B cell (primary cell): ENCODE measurements at regions of chr2 and their contacts with region 1.

Region 1: GRCh38 chr2:219543601-219544358 is at the starts of genes CHPF and TMEM198:
- DNase-seq: peak; percentile 93
- ATAC-seq: peak; percentile 80
- H3K4me3 ChIP-seq: peak within 1 kb of the TSS in 4 of 5 experiments; percentile 63 to 78 (median 67)
- H3K4me3 Mint-ChIP-seq: peak within 1 kb of the TSS; percentile 83
- H3K27ac ChIP-seq: peak within 1 kb of the TSS in 1 of 2 donors; percentile 35
- H3K27ac Mint-ChIP-seq: peak within 1 kb of the TSS; percentile 50
- H3K4me1 ChIP-seq: peaks cover 29 to 31% of the 10 kb centered on the region in 2 donors
- H3K4me1 Mint-ChIP-seq: peaks cover 24% of the 10 kb centered on the region
- H3K27me3 ChIP-seq: peaks cover 0 to 82% (median 21%) of the 10 kb centered on the region in 4 experiments
- H3K27me3 Mint-ChIP-seq: peaks cover 40% of the 10 kb centered on the region
- CTCF ChIP-seq: no peak
- total RNA-seq, gene CHPF: 1.2 and 1.3 TPM in 2 replicates
- total RNA-seq, gene TMEM198: 0.39 TPM in 1 of 2 replicates, not detected in the other

Region 2: DNA sequence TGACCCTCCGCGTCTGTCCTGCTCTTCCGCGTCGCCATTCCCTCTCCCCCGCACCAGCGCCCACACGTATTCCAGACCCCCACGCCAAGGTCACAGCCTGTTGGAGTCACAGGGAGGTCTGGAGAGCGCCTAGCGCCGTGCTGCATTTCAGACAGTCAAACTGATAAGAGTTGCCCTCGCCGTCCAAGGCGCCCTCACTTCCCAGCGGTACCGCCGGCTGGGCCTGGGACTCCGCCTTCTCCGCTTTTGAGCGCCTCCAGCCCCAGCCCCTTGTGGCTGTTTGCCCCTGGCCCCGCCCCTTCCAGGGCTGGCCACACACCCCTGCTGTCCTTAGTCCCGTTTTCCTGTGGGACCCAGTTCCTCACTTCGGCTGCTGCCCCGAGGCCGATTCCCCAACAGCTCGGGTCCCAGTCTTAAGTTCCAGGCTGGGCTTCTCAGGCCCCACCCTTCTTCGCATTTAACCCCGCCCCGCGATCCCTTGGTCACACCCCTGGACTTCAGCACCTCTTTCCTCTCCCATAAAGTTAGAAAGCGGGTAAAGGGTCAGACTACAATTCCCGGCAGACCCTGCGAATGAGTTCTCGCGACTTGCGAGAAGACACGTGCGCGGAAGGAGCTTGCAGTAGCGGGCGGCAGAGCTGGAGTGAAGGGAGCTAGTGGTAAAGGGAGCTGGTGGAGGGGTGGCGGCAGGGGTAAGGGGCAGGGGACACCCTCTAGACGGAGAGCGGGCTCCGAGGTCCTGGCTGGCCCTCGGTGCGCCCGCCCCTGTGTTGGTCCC is 45.3 kb before region 1 on chr2 and contains the start of gene GMPPA:
- CTCF ChIA-PET with region 1: interaction called, 3 read pairs
- POLR2A ChIA-PET with region 1: no interaction called
- intact Hi-C with region 1: loop called (anchors 1 kb)
- DNase-seq: peak; percentile 94
- ATAC-seq: peak; percentile 96
- H3K4me3 ChIP-seq: peak within 1 kb of the TSS; percentile 65 to 90 (median 79)
- H3K4me3 Mint-ChIP-seq: peak within 1 kb of the TSS; percentile 93
- H3K27ac ChIP-seq: peak within 1 kb of the TSS in 1 of 2 donors; percentile 84
- H3K27ac Mint-ChIP-seq: peak within 1 kb of the TSS; percentile 87
- H3K4me1 ChIP-seq: peaks cover 38% of the 10 kb centered on the region in 2 donors
- H3K4me1 Mint-ChIP-seq: peaks cover 32% of the 10 kb centered on the region
- H3K27me3 ChIP-seq: peaks cover 0 to 46% (median 23%) of the 10 kb centered on the region in 4 experiments
- H3K27me3 Mint-ChIP-seq: peaks cover 33% of the 10 kb centered on the region
- CTCF ChIP-seq: no peak
- total RNA-seq, gene GMPPA: 27.8 and 32.0 TPM in 2 replicates

Region 3: DNA sequence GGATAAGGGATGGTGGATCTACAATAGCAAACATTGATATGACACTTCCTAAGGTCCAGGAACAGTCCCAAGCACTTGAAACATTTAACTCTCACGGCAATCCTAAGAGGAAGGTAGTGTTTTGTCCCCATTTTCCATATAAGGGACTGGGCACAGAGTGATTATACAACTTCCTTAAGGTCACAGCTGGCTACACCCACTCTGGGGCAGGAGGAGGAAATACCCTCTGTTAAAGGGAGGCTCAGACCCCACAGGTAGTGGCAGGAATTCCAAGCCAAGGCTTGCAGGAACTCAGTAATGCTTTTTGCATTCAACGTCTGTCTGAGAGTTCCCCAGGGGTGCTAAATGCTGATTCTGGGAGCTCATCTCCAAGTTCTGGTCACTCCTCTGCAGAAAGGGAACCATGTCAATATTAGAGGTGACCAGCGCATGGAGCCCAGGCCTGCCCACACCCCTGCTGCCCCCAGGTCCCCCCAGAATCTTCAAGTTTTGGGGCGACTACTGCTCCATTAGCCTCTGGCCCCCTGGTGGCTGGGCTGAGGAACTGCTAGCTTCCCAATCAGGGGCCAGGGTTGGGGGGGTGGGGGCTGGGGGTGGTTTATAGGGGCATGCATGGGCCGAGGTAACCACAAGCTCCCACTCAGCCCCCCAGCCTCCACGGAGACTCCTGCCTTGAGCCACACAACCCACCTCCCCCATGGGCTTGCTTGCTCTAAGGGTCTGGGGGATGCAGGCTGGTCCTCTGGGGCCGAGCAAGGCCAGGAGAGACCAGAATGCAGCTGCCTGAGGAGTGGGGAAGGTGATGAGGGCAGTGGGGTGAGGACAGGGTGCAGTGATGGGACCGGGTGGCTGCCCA is 16.5 kb after region 1 on chr2:
- CTCF ChIA-PET with region 1: interaction called, 11 read pairs
- POLR2A ChIA-PET with region 1: no interaction called
- intact Hi-C with region 1: no loop called
- DNase-seq: peak; percentile 42
- ATAC-seq: peak; percentile 43
- H3K4me3 ChIP-seq: no peak overlapping the region
- H3K4me3 Mint-ChIP-seq: no peak overlapping the region
- H3K27ac ChIP-seq: no peak overlapping the region
- H3K27ac Mint-ChIP-seq: no peak overlapping the region
- H3K4me1 ChIP-seq: no peaks in the 10 kb centered on the region
- H3K4me1 Mint-ChIP-seq: no peaks in the 10 kb centered on the region
- H3K27me3 ChIP-seq: peaks cover 0 to 15% (median 0%) of the 10 kb centered on the region in 4 experiments
- H3K27me3 Mint-ChIP-seq: peaks cover 29% of the 10 kb centered on the region
- CTCF ChIP-seq: peak; percentile 87

Region 4: DNA sequence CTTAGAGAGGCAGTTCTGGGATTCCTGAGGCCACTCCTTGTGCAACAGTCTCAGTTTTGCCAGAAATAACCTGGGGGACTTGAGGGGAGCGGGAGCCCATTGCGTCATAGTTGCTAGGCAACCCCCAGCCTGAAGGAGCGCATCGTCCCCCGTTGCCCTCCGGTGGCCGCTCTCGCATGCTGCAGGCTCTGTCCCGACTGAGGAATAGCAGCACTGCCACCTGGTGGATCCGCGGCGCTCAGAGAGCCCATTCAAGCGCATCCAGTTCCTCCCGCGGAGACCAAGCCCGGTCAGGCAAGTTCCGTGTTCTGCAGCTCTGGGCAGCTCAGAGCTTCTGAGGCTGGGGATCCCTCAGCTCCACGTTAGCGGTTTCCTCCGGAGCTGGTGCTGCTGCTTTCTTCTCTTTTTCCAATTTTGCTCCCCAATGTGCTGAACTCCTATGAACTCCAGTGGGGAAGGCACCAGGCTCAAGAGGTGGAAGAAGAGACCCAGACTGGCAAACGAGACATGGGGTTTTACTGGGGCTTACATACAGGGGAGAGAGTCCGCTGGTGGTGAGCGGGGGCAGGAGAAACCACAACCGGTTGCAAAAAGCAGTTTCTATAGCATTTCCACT is 98.8 kb after region 1 on chr2:
- CTCF ChIA-PET with region 1: interaction called, 13 read pairs
- POLR2A ChIA-PET with region 1: no interaction called
- intact Hi-C with region 1: loop called (anchors 1 kb)
- DNase-seq: peak; percentile 96
- ATAC-seq: peak; percentile 100
- H3K4me3 ChIP-seq: peak overlapping the region in 4 of 5 experiments; percentile 10 to 40 (median 27)
- H3K4me3 Mint-ChIP-seq: peak overlapping the region; percentile 75
- H3K27ac ChIP-seq: no peak overlapping the region
- H3K27ac Mint-ChIP-seq: peak overlapping the region; percentile 50
- H3K4me1 ChIP-seq: peaks cover 8 to 17% of the 10 kb centered on the region in 2 donors
- H3K4me1 Mint-ChIP-seq: peaks cover 15% of the 10 kb centered on the region
- H3K27me3 ChIP-seq: peaks cover 0 to 37% (median 4%) of the 10 kb centered on the region in 4 experiments
- H3K27me3 Mint-ChIP-seq: peaks cover 31% of the 10 kb centered on the region
- CTCF ChIP-seq: peak; percentile 99

Region 5: GRCh38 chr2:219689676-219690628 is 146.2 kb after region 1 on chr2:
- CTCF ChIA-PET with region 1: interaction called, 13 read pairs
- POLR2A ChIA-PET with region 1: no interaction called
- intact Hi-C with region 1: no loop called
- DNase-seq: peak; percentile 65
- ATAC-seq: peak; percentile 34
- H3K4me3 ChIP-seq: no peak overlapping the region
- H3K4me3 Mint-ChIP-seq: no peak overlapping the region
- H3K27ac ChIP-seq: no peak overlapping the region
- H3K27ac Mint-ChIP-seq: no peak overlapping the region
- H3K4me1 ChIP-seq: peaks cover 5 to 6% of the 10 kb centered on the region in 2 donors
- H3K4me1 Mint-ChIP-seq: peaks cover 8% of the 10 kb centered on the region
- H3K27me3 ChIP-seq: peaks cover 0 to 12% (median 2%) of the 10 kb centered on the region in 4 experiments
- H3K27me3 Mint-ChIP-seq: peaks cover 30% of the 10 kb centered on the region
- CTCF ChIP-seq: peak; percentile 86